Activated CD4-positive, alpha-beta T cell treated with anti-CD3 and anti-CD28 coated beads, Interleukin-2, amount 10 ng/mL, durations not matched to agents 24 days and 14 days (primary cell): ENCODE measurements at regions of chr2 and their contacts with region 1.

Region 1: GRCh38 chr2:39492095-39492590 is 55.1 kb upstream of the MAP4K3 start:
- DNase-seq: peak; percentile 80
- H3K4me3 Mint-ChIP-seq: peak overlapping the region; percentile 51
- H3K27ac Mint-ChIP-seq: peak overlapping the region; percentile 73
- H3K4me1 Mint-ChIP-seq: peaks cover 43% of the 10 kb centered on the region
- H3K27me3 Mint-ChIP-seq: peaks cover 13% of the 10 kb centered on the region

Region 2: GRCh38 chr2:39216346-39217191 is 275.6 kb before region 1 on chr2:
- intact Hi-C with region 1: loop called (anchors 1 kb)
- DNase-seq: peak; percentile 96
- H3K4me3 Mint-ChIP-seq: peak overlapping the region; percentile 62
- H3K27ac Mint-ChIP-seq: peak overlapping the region; percentile 86
- H3K4me1 Mint-ChIP-seq: peaks cover 61% of the 10 kb centered on the region
- H3K27me3 Mint-ChIP-seq: no peaks in the 10 kb centered on the region

Region 3: DNA sequence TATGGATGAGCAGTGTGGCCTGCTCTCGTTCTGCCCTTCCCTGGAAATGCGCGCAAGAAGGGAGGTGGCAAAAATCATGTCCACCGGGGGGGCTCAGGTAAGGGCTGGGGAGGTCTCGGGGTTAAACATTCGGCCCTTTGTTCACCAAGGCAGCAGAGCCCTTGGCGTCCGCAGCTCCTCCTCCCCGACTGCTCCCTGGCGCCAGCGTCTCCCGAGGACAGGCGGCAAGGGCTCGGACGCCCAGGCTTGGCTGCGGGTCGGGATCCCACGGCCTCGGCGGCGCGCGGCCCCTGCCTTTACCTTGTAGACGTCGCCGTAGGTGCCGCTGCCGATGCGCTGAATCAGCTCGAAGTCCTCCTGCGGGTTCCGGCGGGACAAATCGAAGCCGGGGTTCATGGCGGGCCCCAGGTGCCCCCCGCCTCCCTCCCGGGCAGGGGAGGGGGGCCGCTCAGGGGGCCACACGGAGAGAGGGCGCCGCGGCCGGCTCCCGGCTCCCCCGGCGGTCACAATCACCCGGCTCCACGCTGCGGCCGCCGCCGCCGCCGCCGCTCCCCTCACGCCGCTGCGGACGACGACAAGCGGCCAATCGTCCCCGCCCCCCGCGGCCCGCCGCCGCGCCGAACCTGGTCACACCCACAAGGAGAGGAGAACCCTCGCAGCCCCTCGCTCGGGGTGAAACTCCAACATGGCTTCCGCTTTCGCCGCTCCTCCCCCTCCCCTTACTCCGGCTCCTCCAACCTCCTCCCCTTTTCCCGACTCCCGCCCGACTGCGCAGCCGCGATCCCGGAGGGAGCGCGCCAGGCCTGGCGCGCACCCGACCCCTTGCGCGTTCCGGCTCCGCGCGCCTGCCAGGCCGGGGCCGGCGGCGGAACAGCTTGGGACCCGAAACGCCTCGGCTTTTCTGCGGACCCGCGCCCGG is 55.3 kb before region 1 on chr2 and contains the start of gene MAP4K3:
- intact Hi-C with region 1: loop called (anchors 1 kb)
- DNase-seq: peak; percentile 93
- H3K4me3 Mint-ChIP-seq: peak within 1 kb of the TSS; percentile 91
- H3K27ac Mint-ChIP-seq: peak within 1 kb of the TSS; percentile 90
- H3K4me1 Mint-ChIP-seq: peaks cover 44% of the 10 kb centered on the region
- H3K27me3 Mint-ChIP-seq: no peaks in the 10 kb centered on the region
- total RNA-seq, gene MAP4K3: 12.9 and 16.6 TPM in 2 replicates

Region 4: DNA sequence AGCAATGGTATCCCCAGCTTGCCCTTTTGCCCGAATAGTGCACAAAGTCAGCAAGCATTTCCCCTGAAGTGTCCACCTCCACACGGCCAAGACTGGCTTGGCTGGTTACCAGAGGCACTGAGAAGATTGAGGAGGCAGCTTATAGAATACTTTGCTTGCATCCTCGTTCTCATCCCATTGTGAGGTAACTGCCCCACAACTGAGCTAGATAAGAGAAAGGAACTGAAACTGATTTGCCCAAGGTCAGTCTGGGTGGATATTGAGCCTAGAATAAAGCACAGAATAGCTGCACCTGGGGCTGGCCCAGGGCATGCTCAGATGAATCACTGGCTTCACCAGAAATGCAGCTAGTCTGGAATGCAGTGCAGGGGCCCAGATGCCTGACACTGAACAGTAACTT is 22.3 kb before region 1 on chr2:
- intact Hi-C with region 1: loop called (anchors 1 kb)
- DNase-seq: no peak
- H3K4me3 Mint-ChIP-seq: no peak overlapping the region
- H3K27ac Mint-ChIP-seq: no peak overlapping the region
- H3K4me1 Mint-ChIP-seq: peaks cover 17% of the 10 kb centered on the region
- H3K27me3 Mint-ChIP-seq: no peaks in the 10 kb centered on the region

Region 5: DNA sequence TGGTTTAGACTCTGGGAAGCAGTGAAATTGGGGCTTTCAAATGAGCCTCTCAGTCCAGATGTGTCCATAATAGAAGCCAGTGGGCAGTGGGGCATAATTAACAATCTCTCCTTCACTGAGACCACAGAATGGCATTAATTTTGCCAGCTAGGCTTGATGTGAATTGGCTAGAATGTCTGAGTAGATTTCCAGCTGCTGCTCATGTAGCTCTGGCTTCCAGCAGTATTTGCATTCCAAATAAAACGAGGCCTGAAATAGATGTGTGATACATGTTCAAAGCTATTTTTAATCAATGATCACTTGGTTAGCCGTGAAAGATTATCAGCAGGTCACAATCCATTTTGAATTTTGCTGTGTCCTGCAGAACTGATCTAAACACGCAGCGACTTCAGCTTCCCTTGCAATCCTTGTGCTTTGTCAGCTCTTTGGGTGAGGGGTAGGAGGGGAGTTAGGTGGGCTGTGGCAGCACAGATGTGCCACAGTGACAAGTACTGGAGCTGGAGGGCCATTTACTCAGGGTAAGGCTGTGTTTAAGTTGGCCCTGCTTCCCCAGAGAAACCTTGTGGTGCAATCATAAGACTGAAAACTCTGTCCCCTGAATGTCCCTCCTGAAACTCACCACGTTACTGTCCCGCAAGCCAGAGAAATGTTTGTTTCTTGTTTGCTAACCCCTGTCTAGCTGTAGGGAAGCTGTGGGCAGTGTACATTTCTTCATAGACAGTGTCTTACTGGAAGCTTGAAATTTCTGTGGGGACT is 116.7 kb after region 1 on chr2:
- intact Hi-C with region 1: no loop called
- DNase-seq: no peak
- H3K4me3 Mint-ChIP-seq: no peak overlapping the region
- H3K27ac Mint-ChIP-seq: no peak overlapping the region
- H3K4me1 Mint-ChIP-seq: no peaks in the 10 kb centered on the region
- H3K27me3 Mint-ChIP-seq: peaks cover 22% of the 10 kb centered on the region

Region 6: DNA sequence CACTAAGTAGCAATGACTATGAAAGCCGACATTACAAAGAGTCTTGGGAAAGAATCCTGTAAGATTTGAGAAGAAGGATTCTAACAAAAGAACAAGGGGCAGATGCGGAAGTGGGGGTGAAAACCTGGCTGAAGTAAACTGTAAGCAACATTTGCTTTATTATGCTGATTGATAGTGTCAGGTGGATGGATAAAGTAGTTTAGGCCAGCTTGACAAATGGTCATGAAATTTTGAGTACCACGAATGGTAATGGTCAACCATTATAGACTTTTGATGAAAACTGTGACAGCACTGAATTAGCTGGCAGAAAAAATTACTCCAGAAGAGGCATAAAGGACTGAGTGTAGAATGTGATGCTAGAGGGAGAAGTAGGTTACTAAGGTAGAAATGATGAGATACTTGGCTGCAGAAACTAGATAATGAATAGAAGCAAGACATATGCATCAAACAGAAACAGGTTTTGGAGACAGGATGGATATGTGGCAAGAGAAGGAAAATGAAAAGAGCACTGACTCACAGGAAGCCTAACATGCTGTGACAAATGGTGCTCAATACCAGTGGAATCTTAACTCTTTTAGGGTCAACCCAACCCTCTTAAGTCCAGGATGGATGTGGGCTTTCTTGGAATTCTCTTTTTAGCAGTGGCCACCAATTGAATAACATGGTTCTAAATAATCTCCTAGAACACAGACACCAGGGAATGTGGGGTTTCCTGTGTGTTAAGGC is 280.1 kb after region 1 on chr2:
- intact Hi-C with region 1: loop called (anchors 5 kb)
- DNase-seq: no peak
- H3K4me3 Mint-ChIP-seq: no peak overlapping the region
- H3K27ac Mint-ChIP-seq: peak overlapping the region; percentile 12
- H3K4me1 Mint-ChIP-seq: peaks cover 30% of the 10 kb centered on the region
- H3K27me3 Mint-ChIP-seq: no peaks in the 10 kb centered on the region